Right cardiac atrium (tissue), 5 donors: ENCODE measurements at regions of chr10 and their contacts with region 1.

Region 1: GRCh38 chr10:96395931-96396877 is 37.4 kb upstream of the OPALIN start:
- DNase-seq: peak; percentile 60 to 86 (median 81)
- ATAC-seq: peak; percentile 71 to 78
- H3K4me3 ChIP-seq: no peak overlapping the region
- H3K27ac ChIP-seq: no peak overlapping the region
- H3K4me1 ChIP-seq: peaks cover 2% of the 10 kb centered on the region
- H3K27me3 ChIP-seq: no peaks in the 10 kb centered on the region

Region 2: DNA sequence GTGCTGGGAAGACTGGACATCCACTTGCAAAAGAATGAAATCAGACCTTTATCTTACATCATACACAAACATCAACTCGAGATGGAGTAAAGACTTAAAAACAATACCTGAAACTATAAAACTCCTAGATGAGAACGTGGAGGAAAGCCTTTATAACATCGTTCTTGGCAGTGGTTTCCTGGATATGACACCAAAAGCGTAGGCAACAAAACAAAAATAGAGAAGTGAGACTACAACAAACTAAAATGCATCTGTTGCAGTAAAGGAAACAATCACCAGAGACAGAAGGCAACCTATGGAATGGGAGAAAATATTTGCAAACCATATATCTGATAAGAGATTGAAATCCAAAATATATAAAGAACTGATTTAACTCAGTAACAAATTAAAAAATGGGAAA is 455.1 kb before region 1 on chr10:
- intact Hi-C with region 1: no loop called
- DNase-seq: no peak
- ATAC-seq: no peak
- H3K4me3 ChIP-seq: no peak overlapping the region
- H3K27ac ChIP-seq: no peak overlapping the region
- H3K4me1 ChIP-seq: no peaks in the 10 kb centered on the region
- H3K27me3 ChIP-seq: no peaks in the 10 kb centered on the region

Region 3: DNA sequence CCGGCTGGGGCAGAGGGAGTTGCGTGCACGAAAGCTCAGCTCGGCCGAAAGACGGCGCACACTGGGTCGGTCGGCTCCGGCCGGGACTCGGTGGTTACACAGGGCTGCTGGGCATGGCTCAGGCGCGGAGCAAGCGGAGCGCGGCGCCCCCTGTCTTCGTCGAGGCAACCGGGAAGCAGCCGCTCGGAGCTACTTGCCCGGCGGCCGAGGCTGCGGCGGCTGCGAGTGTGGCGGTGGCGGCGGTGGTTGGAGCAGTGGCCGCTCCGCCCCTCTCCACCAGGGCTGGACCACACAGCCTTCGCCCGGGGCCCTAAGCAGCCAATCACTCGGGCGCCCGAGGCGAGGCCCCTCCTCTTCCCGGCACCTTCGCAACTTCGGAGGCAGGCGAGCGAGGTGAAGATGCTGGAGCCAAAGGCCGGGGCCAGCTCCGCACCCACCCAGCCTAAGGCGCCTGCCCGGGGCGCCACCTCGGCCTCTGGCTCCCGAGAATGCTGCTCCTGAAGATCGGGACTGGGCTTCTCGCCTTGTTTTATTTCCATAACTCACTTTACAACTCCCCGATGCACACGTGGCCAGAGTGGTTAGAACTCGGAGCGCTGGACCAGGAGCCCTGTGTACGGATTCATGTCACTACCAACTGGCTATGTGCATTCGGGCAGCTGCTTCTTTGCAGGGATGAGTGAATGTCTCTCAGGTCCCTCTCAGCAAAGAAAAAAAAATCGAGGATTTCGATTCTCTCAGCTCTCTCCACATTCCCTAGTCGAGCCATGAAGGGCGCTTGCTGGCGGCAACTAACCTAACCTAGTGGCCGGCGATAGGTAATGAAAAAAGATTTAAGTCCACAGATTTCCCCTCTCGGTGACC is 117.7 kb after region 1 on chr10 and contains the start of gene TLL2:
- intact Hi-C with region 1: loop called (anchors 2 to 5 kb)
- DNase-seq: peak; percentile 90 to 96 (median 95)
- ATAC-seq: peak; percentile 98
- H3K4me3 ChIP-seq: peak within 1 kb of the TSS; percentile 54
- H3K27ac ChIP-seq: no peak within 1 kb of the TSS
- H3K4me1 ChIP-seq: peaks cover 4% of the 10 kb centered on the region
- H3K27me3 ChIP-seq: no peaks in the 10 kb centered on the region
- total RNA-seq, gene TLL2: 1.4 to 5.2 (median 2.6) TPM

Region 4: GRCh38 chr10:96743988-96744585 is 347.9 kb after region 1 on chr10:
- intact Hi-C with region 1: loop called in 1 of 4 experiments (anchors 10 kb)
- DNase-seq: no peak
- ATAC-seq: peak in 1 of 2 donors; percentile 23
- H3K4me3 ChIP-seq: no peak overlapping the region
- H3K27ac ChIP-seq: no peak overlapping the region
- H3K4me1 ChIP-seq: no peaks in the 10 kb centered on the region
- H3K27me3 ChIP-seq: no peaks in the 10 kb centered on the region

Region 5: DNA sequence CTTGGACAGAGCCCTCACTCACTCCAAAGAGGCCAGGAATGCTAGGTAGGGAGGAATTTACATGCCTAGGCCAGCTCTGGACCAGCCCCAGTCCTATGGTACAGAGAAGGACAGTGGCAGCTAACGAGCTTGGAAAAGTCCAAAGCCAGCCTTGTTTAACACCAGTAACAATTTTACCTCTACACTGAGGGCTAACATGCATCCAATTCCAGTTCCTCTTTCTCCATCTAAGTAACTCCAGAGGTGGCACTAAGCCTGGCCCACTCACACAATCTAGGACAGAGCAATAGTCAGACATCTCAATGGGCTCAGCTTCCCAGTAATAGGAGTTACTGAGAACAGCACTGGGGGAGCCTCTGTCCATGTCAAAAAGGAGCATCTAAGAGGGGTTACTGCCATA is 430.2 kb after region 1 on chr10:
- intact Hi-C with region 1: loop called in 1 of 4 experiments (anchors 10 kb)
- DNase-seq: no peak
- ATAC-seq: no peak
- H3K4me3 ChIP-seq: no peak overlapping the region
- H3K27ac ChIP-seq: no peak overlapping the region
- H3K4me1 ChIP-seq: no peaks in the 10 kb centered on the region
- H3K27me3 ChIP-seq: no peaks in the 10 kb centered on the region